ENCODE measurements at regions of chr10 and their contacts with region 1.

Region 1: DNA sequence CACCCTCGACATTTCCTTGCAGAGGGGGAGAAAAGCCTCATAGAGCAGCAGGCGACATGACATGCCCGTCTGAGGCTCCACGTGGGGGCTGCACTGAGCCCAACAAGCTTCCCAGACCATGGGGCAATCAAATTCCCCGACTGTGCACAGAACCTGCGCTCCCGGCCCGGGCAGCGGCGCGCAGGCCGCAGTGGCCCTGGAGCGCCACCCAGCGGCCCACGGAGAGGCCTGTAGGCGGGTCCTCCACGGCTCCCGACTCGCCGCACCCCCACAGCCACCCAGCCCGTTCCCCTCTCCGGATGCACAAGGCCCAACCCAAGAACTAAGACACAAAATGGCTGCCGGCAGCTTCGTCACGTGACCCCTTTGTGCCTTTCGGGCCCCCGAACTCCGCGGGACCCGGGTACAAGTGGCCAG is 816 bp downstream of the EPC1 start:
- DNase-seq: peak; percentile 94 to 97
- ATAC-seq: peak; percentile 82 to 95 (median 83)
- H3K4me3 ChIP-seq: peak overlapping the region; percentile 85
- H3K4me3 Mint-ChIP-seq: peak overlapping the region; percentile 95
- H3K27ac ChIP-seq: peak overlapping the region; percentile 95
- H3K27ac Mint-ChIP-seq: peak overlapping the region; percentile 95 to 99
- H3K4me1 ChIP-seq: peaks cover 11% of the 10 kb centered on the region
- H3K4me1 Mint-ChIP-seq: peaks cover 57 to 68% of the 10 kb centered on the region in 2 donors
- H3K27me3 ChIP-seq: no peaks in the 10 kb centered on the region
- H3K27me3 Mint-ChIP-seq: no peaks in the 10 kb centered on the region
- CTCF ChIP-seq: peak; percentile 85

Region 2: DNA sequence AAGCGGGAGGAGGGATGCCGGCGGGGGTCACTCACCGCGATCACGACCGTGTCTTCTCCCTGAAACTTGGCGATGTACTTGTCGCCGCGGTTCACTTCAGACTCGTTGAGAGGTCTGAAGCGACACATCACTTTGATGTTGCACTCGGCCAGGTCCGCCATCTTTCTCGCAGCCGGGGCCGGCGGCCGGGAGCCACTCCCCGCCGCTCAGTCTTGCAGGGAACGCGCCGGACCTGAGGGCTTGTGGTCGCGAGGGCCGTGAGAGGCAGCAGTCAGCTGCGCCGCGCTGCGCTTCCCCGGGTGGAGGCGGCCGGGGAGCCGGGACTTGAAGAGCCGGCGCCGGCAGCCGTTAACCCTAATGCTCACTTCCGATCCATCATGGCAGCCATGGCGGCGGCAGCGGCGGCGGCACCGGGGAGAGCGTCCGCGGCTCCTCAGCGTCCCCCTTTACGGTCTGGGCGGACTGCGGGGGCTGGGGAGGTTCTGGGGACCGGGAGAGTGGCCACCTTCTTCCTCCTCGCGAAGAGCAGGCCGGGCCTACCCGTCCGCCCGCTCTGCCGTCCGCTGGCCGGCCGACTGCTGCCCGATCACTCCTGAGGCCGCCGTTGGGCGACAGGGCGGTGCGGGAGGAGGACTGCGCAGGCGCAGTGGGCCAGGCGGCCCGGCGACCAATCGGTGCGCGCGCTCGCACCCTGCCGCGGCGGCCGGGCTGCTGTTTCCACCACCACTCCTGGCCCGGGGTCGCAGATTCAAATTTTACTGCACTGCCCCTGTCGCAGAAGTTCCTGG is 290.1 kb before region 1 on chr10 and contains the start of gene KIF5B:
- intact Hi-C with region 1: loop called (anchors 10 kb)
- DNase-seq: peak; percentile 88 to 95
- ATAC-seq: peak; percentile 78 to 88 (median 82)
- H3K4me3 ChIP-seq: peak within 1 kb of the TSS; percentile 98
- H3K4me3 Mint-ChIP-seq: peak within 1 kb of the TSS; percentile 98
- H3K27ac ChIP-seq: peak within 1 kb of the TSS; percentile 89
- H3K27ac Mint-ChIP-seq: peak within 1 kb of the TSS; percentile 93 to 98
- H3K4me1 ChIP-seq: peaks cover 14% of the 10 kb centered on the region
- H3K4me1 Mint-ChIP-seq: peaks cover 56 to 59% of the 10 kb centered on the region in 2 donors
- H3K27me3 ChIP-seq: no peaks in the 10 kb centered on the region
- H3K27me3 Mint-ChIP-seq: no peaks in the 10 kb centered on the region
- CTCF ChIP-seq: no peak
- total RNA-seq, gene KIF5B: 51.0 to 64.2 (median 61.1) TPM

Region 3: DNA sequence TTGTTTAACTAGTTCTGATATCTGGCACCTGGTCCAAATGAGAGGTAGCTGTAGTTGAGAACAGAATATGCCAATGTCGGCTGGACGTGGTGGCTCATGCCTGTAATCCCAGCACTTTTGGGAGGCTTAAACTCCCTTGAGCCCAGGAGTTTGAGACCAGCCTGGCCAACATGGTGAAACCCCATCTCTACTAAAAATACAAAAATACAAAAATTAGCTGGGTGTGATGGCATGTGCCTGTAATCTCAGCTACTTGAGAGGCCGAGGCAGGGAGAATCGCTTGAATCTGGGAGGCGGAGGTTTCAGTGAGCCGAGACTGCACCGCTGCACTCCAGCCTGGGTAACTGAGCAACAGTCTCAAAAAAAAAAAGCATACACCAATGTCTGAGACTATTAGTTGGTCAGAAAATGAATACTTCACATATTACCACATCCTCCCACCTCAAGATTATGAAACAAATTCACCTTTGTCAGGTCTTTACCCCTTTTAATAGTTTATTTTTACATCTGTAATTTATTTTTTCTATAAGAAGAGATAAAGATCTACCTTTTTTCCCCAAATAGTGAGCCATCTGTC is 38.0 kb before region 1 on chr10:
- intact Hi-C with region 1: loop called (anchors 5 kb)
- DNase-seq: peak in 1 of 2 donors; percentile 28
- ATAC-seq: peak; percentile 67 to 78 (median 71)
- H3K4me3 ChIP-seq: no peak overlapping the region
- H3K4me3 Mint-ChIP-seq: peak overlapping the region; percentile 55
- H3K27ac ChIP-seq: peak overlapping the region; percentile 25
- H3K27ac Mint-ChIP-seq: peak overlapping the region; percentile 80 to 81
- H3K4me1 ChIP-seq: peaks cover 9% of the 10 kb centered on the region
- H3K4me1 Mint-ChIP-seq: peaks cover 63 to 67% of the 10 kb centered on the region in 2 donors
- H3K27me3 ChIP-seq: no peaks in the 10 kb centered on the region
- H3K27me3 Mint-ChIP-seq: no peaks in the 10 kb centered on the region
- CTCF ChIP-seq: no peak

Region 4: DNA sequence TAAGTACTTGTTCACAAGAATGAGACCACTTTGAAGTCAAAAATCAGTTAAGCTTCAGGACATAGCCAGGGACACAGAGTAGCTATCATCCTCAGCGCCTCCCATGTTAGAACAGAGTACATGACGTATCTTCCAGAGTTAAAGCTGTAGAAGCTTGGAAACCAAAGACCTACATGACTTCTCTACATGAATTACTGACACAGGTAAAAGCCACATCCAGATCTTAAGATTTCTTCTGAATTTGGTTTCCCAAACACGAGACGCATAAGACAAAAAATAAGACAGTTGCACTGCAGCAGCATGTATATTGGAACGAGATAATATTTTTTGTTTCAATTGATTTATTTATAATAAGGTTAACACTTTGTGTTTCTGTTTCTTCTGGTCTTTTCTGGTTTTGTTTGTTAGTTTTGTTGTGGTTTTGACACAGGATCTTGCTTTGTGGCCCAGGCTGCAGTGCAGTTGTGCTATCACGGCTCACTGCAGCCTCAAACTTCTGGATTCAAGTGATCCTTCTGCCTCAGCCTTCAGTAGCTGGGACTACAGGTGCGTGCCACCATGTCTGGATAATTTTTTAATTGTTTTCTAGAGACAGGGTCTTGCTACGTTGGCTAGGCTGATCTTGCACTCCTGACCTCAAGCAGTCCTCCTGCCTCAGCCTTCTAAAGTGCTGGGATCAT is 11.1 kb after region 1 on chr10:
- intact Hi-C with region 1: loop called (anchors 1 kb)
- DNase-seq: peak in 1 of 2 donors; percentile 68
- ATAC-seq: peak; percentile 75 to 83 (median 81)
- H3K4me3 ChIP-seq: no peak overlapping the region
- H3K4me3 Mint-ChIP-seq: peak overlapping the region; percentile 54
- H3K27ac ChIP-seq: peak overlapping the region; percentile 46
- H3K27ac Mint-ChIP-seq: peak overlapping the region; percentile 10 to 84
- H3K4me1 ChIP-seq: peaks cover 35% of the 10 kb centered on the region
- H3K4me1 Mint-ChIP-seq: peaks cover 55 to 58% of the 10 kb centered on the region in 2 donors
- H3K27me3 ChIP-seq: no peaks in the 10 kb centered on the region
- H3K27me3 Mint-ChIP-seq: no peaks in the 10 kb centered on the region
- CTCF ChIP-seq: no peak

Region 5: DNA sequence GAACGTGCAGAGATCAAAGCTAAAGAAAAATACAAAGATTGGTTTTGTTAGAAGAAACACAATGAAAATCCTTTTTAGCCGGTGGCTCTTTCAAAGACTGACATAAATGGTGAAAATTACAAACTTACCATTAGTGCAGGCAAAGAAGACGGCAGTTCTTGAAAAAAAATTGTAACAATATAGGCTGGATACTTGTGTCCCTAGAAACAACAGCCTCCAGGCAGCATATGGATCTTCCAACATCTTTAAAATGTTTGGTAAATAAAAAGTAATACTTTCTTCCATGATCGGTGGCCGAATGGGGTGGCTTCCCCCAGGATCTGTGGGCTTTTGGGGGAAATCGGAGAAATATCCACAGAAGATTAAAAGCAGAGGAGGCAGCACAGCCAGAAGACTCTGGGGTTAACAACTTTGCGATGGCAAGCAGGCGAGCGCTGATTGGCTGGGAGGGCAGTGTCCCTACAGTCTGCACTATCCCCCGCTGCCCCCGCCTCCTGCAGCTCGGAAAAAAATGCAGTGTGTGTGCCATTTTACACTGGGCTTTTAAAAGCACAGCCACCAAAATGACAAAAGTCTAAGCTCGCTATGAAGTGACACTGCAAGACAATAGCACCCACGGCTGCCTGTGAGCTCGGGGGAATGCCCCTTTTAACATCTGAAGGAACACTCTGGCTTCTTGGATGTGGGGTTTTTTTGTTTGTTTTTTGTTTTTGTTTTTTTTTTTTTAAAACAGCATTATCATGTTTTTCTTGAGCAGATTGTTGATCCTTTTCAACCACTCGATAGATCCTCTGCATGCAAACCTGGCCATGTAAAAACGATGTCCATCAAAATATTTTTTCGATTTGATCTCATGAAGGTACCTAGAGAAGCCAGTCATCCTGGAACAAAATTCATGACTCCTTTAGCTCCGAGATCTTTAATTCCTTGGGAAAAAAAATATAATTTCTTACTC is 32.5 kb after region 1 on chr10:
- intact Hi-C with region 1: loop called (anchors 1 kb)
- DNase-seq: peak; percentile 87 to 95
- ATAC-seq: peak; percentile 90 to 98 (median 95)
- H3K4me3 ChIP-seq: peak overlapping the region; percentile 97
- H3K4me3 Mint-ChIP-seq: no peak overlapping the region
- H3K27ac ChIP-seq: peak overlapping the region; percentile 82
- H3K27ac Mint-ChIP-seq: no peak overlapping the region
- H3K4me1 ChIP-seq: peaks cover 3% of the 10 kb centered on the region
- H3K4me1 Mint-ChIP-seq: peaks cover 27 to 32% of the 10 kb centered on the region in 2 donors
- H3K27me3 ChIP-seq: no peaks in the 10 kb centered on the region
- H3K27me3 Mint-ChIP-seq: no peaks in the 10 kb centered on the region
- CTCF ChIP-seq: no peak